ENCODE measurements at regions of chr4 and their contacts with region 1.

Region 1: GRCh38 chr4:163681208-163681821 is 186.8 kb downstream of the TMA16 start:
- DNase-seq: peak; percentile 38
- ATAC-seq: peak; percentile 85
- H3K4me3 ChIP-seq: no peak overlapping the region
- H3K27ac ChIP-seq: no peak overlapping the region
- H3K4me1 ChIP-seq: no peaks in the 10 kb centered on the region
- H3K27me3 ChIP-seq: no peaks in the 10 kb centered on the region
- CTCF ChIP-seq: peak; percentile 21 to 73 (median 62); a peak in 5 of 6 replicates
- POLR2A ChIP-seq: no peak
- RAD21 ChIP-seq: peak; percentile 44

Region 2: GRCh38 chr4:163196926-163197480 is 484.3 kb before region 1 on chr4:
- CTCF ChIA-PET with region 1: no interaction called
- POLR2A ChIA-PET with region 1: no interaction called
- RAD21 ChIA-PET with region 1: no interaction called
- intact Hi-C with region 1: no loop called
- DNase-seq: no peak
- ATAC-seq: no peak
- H3K4me3 ChIP-seq: no peak overlapping the region
- H3K27ac ChIP-seq: no peak overlapping the region
- H3K4me1 ChIP-seq: no peaks in the 10 kb centered on the region
- H3K27me3 ChIP-seq: no peaks in the 10 kb centered on the region
- CTCF ChIP-seq: no peak
- POLR2A ChIP-seq: no peak
- RAD21 ChIP-seq: no peak

Region 3: GRCh38 chr4:163484906-163485305 is 196.4 kb before region 1 on chr4:
- CTCF ChIA-PET with region 1: no interaction called
- POLR2A ChIA-PET with region 1: no interaction called
- RAD21 ChIA-PET with region 1: no interaction called
- intact Hi-C with region 1: loop called (anchors 10 kb)
- DNase-seq: peak; percentile 50
- ATAC-seq: peak; percentile 89
- H3K4me3 ChIP-seq: no peak overlapping the region
- H3K27ac ChIP-seq: no peak overlapping the region
- H3K4me1 ChIP-seq: no peaks in the 10 kb centered on the region
- H3K27me3 ChIP-seq: no peaks in the 10 kb centered on the region
- CTCF ChIP-seq: peak; percentile 50 to 78 (median 61); a peak in 5 of 6 replicates
- POLR2A ChIP-seq: no peak
- RAD21 ChIP-seq: peak; percentile 70

Region 4: DNA sequence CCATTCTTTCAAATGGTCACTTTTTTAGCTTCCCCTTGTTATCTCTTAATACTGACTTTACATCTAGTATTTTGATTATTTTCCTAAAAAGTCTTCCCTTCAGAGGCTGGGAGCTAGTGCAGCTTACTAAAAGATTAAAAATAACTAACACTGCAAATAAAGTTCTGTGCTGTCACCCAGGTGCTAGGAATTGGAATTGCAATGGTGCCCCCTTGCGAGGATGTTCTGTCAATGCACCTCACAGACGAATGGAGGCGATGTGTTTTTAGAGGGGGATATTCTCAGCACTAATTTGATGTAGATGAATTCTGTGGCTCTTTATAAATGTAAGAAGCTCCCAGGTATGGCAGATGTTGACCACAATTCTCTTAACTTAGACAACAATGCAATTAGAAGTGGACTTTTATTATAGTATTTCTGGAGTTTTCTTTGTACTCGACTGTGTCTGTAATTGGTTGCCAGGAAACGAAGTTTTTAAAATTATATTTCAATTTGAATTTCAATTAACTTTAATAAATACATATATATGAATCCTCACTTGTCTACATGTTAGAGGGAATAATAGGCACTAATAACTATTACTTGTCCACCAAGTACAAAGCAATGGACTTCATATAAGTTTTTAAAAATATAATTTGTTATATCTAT is 1050.6 kb after region 1 on chr4:
- CTCF ChIA-PET with region 1: interaction called, 3 read pairs
- POLR2A ChIA-PET with region 1: no interaction called
- RAD21 ChIA-PET with region 1: no interaction called
- intact Hi-C with region 1: loop called (anchors 2 kb)
- DNase-seq: peak; percentile 43
- ATAC-seq: peak; percentile 81
- H3K4me3 ChIP-seq: no peak overlapping the region
- H3K27ac ChIP-seq: no peak overlapping the region
- H3K4me1 ChIP-seq: no peaks in the 10 kb centered on the region
- H3K27me3 ChIP-seq: no peaks in the 10 kb centered on the region
- CTCF ChIP-seq: peak; percentile 71 to 91 (median 82)
- POLR2A ChIP-seq: no peak
- RAD21 ChIP-seq: peak; percentile 87

Measured in HCT116 (cell line).